ENCODE measurements at regions of chr17 and their contacts with region 1.

Region 1: GRCh38 chr17:57861000-57861789 is 11.4 kb upstream of the MRPS23 start:
- DNase-seq: peak; percentile 46
- H3K4me3 Mint-ChIP-seq: peak overlapping the region; percentile 71
- H3K27ac Mint-ChIP-seq: no peak overlapping the region
- H3K4me1 Mint-ChIP-seq: peaks cover 13% of the 10 kb centered on the region
- H3K27me3 Mint-ChIP-seq: peaks cover 10% of the 10 kb centered on the region

Region 2: GRCh38 chr17:57833179-57833939 is 27.8 kb before region 1 on chr17:
- CTCF ChIA-PET with region 1: interaction called, 10 read pairs
- POLR2A ChIA-PET with region 1: no interaction called
- intact Hi-C with region 1: no loop called
- DNase-seq: peak; percentile 73
- H3K4me3 Mint-ChIP-seq: no peak overlapping the region
- H3K27ac Mint-ChIP-seq: no peak overlapping the region
- H3K4me1 Mint-ChIP-seq: peaks cover 6% of the 10 kb centered on the region
- H3K27me3 Mint-ChIP-seq: no peaks in the 10 kb centered on the region

Region 3: DNA sequence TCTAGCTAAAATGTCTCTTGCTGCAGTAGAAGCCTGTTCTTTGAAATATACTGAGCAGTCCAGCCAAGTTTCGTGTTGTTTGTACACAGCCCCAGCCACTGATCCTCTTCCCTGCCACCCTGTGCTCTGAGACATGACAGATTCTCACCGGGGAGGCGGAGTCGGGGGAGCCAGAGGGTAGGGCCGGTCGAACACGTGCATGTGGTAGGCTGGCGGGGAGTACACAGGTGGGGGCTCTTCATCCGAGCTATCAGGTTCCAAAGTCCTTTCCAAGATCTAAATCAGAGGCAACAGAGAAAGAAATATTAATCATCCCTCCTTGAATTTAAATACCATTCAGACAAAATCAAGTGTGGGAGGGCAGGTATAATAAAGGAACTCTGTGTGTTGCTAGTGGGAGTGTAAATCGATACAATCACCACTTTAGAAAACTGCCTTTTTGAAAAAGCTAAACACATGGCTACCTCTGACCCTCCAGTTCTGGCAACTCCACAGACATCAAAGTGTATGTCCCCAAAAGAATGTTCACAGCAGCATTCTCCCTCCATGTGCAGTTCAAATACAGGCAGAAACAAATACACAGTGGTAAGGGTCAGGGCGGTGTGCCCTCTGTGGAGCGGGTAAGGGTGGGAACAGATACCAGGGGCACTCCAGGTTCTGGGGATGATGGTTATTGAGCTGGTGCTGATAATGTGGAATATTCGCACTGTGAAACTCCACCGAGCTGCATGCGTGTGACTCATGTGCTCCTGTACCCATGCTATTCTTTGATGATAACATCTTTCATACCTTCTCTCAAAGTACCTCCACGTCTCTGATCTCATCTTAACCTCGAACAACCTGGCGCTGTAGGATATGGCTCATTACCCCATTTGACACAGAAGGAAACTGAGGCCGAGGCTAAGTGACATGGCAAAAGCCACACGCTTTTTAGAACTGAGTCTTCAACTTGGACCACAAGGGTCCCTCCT is 18.6 kb after region 1 on chr17:
- CTCF ChIA-PET with region 1: interaction called, 18 read pairs
- POLR2A ChIA-PET with region 1: interaction called, 5 read pairs
- intact Hi-C with region 1: no loop called
- DNase-seq: peak; percentile 57
- H3K4me3 Mint-ChIP-seq: no peak overlapping the region
- H3K27ac Mint-ChIP-seq: peak overlapping the region; percentile 35
- H3K4me1 Mint-ChIP-seq: peaks cover 31% of the 10 kb centered on the region
- H3K27me3 Mint-ChIP-seq: peaks cover 13% of the 10 kb centered on the region

Region 4: GRCh38 chr17:57955183-57955931 is 94.2 kb after region 1 on chr17 and contains the start of gene CUEDC1:
- CTCF ChIA-PET with region 1: interaction called, 11 read pairs
- POLR2A ChIA-PET with region 1: no interaction called
- intact Hi-C with region 1: no loop called
- DNase-seq: peak; percentile 74
- H3K4me3 Mint-ChIP-seq: peak within 1 kb of the TSS; percentile 48
- H3K27ac Mint-ChIP-seq: no peak within 1 kb of the TSS
- H3K4me1 Mint-ChIP-seq: peaks cover 24% of the 10 kb centered on the region
- H3K27me3 Mint-ChIP-seq: peaks cover 16% of the 10 kb centered on the region
- total RNA-seq, gene CUEDC1: 0.29 to 0.36 TPM

Region 5: GRCh38 chr17:57987580-57988421 is 126.6 kb after region 1 on chr17 and contains the start of gene VEZF1:
- CTCF ChIA-PET with region 1: interaction called, 10 read pairs
- POLR2A ChIA-PET with region 1: no interaction called
- intact Hi-C with region 1: no loop called
- DNase-seq: peak; percentile 82
- H3K4me3 Mint-ChIP-seq: peak within 1 kb of the TSS; percentile 89
- H3K27ac Mint-ChIP-seq: peak within 1 kb of the TSS; percentile 87
- H3K4me1 Mint-ChIP-seq: peaks cover 56% of the 10 kb centered on the region
- H3K27me3 Mint-ChIP-seq: no peaks in the 10 kb centered on the region
- total RNA-seq, gene VEZF1: 26.8 to 29.8 TPM

Region 6: DNA sequence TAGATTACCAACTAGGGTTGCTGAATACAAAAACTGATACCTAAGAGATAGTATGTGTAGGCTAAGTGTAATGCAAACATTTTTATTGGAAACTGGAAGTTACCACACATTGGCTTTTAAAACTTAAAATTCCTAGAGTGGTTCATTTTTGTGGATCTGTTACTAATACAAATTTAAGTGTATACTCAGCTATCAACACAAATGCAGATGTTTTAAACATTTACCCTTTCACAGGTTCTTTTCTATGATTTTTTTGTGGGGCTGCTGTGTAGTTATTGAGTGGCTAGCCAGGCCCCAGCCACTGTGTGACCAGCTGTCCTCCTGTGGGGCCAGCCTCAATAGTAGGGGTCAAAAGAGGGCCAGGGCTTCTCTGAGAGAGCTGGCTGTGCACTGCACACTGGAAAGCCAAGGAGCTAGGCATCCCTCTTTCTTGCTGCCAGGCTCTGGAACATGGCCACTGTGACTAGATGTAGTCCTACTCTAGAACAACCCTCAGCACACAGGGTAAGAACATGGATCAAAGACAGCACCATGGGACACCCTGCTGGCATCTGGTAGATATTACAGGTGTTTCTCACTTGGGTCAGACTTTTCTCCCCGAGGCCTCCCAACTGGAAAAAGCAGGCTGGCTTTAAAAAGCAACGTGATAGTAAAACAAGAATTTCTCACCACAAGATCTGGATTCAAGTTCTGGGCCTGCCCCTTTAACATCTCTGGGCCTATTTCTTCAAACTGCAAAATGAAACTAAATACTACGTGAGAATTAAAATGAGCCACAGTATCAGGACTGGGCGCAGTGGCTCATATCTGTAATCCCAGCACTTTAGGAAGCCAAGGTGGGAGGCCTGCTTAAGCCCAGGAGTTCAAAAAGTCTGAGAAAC is 134.1 kb after region 1 on chr17:
- CTCF ChIA-PET with region 1: interaction called, 170 read pairs
- POLR2A ChIA-PET with region 1: interaction called, 9 read pairs
- intact Hi-C with region 1: loop called (anchors 1 kb)
- DNase-seq: peak; percentile 76
- H3K4me3 Mint-ChIP-seq: no peak overlapping the region
- H3K27ac Mint-ChIP-seq: peak overlapping the region; percentile 47
- H3K4me1 Mint-ChIP-seq: peaks cover 69% of the 10 kb centered on the region
- H3K27me3 Mint-ChIP-seq: no peaks in the 10 kb centered on the region

Region 7: DNA sequence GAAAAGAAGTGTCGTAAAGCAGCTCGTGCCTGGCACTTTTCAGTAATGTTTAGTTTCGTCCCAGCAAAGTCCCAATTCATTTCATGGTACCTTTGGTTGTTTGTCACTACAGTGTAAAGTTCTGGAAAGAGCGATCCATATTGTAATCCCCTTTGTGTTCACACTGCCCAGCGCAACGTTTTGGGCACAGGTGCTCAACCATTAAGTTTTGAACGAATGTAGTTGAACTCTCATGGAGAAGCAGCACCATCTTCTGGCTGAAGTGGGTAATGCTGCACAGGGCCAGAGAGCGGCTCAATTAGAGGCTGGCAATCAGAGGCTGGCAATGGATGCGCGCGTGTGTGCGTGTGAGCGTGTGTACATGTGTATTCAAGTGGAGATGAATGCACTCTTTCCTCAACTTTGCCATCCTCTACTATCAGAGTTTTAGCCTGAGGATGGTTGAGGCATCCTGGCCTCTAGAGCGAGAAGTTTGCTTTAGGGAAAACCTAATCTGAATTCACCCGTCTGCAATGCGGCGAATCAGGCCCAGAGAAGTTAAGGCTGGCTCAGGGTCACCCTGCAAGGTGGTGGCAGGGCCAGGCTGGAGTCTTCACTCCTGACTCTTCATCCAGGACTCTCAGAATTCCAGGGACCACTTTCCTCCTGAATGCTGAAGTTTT is 251.9 kb after region 1 on chr17:
- CTCF ChIA-PET with region 1: interaction called, 79 read pairs
- POLR2A ChIA-PET with region 1: no interaction called
- intact Hi-C with region 1: loop called (anchors 1 kb)
- DNase-seq: peak; percentile 89
- H3K4me3 Mint-ChIP-seq: no peak overlapping the region
- H3K27ac Mint-ChIP-seq: no peak overlapping the region
- H3K4me1 Mint-ChIP-seq: peaks cover 4% of the 10 kb centered on the region
- H3K27me3 Mint-ChIP-seq: peaks cover 2% of the 10 kb centered on the region

Measured in activated CD4-positive, alpha-beta memory T cell treated with anti-CD3 and anti-CD28 coated beads for 36 hours (primary cell).